H1 (cell line): ENCODE measurements at regions of chr4 and their contacts with region 1.

Region 1: DNA sequence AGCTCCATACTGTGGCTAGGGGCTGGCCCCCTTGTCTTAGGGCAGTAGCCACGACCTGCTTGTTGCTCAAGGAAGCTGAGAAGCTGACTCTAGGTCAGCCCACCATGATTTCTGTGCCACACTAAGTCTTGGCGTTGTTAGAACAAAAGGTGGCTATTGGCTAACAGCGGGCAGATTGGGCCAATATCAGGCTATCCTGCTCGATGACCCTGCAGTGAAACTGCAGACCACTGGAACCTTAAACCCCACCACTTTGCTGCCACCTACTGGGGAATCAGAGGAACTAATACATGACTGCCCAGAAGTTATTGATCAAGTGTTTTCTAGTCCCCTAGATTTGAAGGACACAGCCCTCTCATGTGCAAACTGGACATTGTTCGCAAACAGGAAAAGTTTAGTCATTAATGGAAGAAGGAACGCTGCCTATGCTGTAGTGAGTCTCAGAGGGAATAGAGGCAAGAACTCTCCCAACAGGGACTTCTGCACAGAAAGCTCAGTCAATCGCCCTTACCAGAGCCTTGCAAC is 17.0 kb upstream of the PAPSS1 start:
- DNase-seq: peak in 1 of 2 experiments; percentile 66
- H3K4me3 ChIP-seq: no peak overlapping the region
- H3K27ac ChIP-seq: no peak overlapping the region
- H3K4me1 ChIP-seq: peaks cover 0 to 21% (median 6%) of the 10 kb centered on the region in 4 experiments; a peak in 5 of 7 replicates
- H3K27me3 ChIP-seq: peaks cover 10 to 32% (median 16%) of the 10 kb centered on the region in 4 experiments; a peak in 5 of 7 replicates
- CTCF ChIP-seq: peak; percentile 36 to 82 (median 65)
- EP300 ChIP-seq: no peak
- POLR2A ChIP-seq: no peak
- RAD21 ChIP-seq: peak; percentile 86 to 88

Region 2: GRCh38 chr4:107654694-107655093 is 82.3 kb before region 1 on chr4:
- CTCF ChIA-PET with region 1: interaction called, 25 read pairs
- POLR2A ChIA-PET with region 1: no interaction called
- DNase-seq: no peak
- H3K4me3 ChIP-seq: no peak overlapping the region
- H3K27ac ChIP-seq: no peak overlapping the region
- H3K4me1 ChIP-seq: peaks cover 0 to 3% (median 1%) of the 10 kb centered on the region in 4 experiments; a peak in 3 of 7 replicates
- H3K27me3 ChIP-seq: no peaks in the 10 kb centered on the region
- CTCF ChIP-seq: no peak
- EP300 ChIP-seq: no peak
- POLR2A ChIP-seq: no peak
- RAD21 ChIP-seq: peak; percentile 15 to 18; a peak in 2 of 4 replicates

Region 3: GRCh38 chr4:107719922-107720722 is 16.9 kb before region 1 on chr4 and contains the start of gene PAPSS1:
- CTCF ChIA-PET with region 1: interaction called, 24 read pairs
- POLR2A ChIA-PET with region 1: interaction called, 6 read pairs
- DNase-seq: peak; percentile 96 to 97
- H3K4me3 ChIP-seq: peak within 1 kb of the TSS; percentile 77 to 86 (median 80)
- H3K27ac ChIP-seq: no peak within 1 kb of the TSS
- H3K4me1 ChIP-seq: peaks cover 4 to 18% (median 5%) of the 10 kb centered on the region in 4 experiments; a peak in 6 of 7 replicates
- H3K27me3 ChIP-seq: no peaks in the 10 kb centered on the region
- CTCF ChIP-seq: no peak
- EP300 ChIP-seq: no peak
- POLR2A ChIP-seq: peak in 1 of 2 experiments; percentile 59; a peak in 1 of 3 replicates
- RAD21 ChIP-seq: no peak
- total RNA-seq, gene PAPSS1: 79.1 and 79.2 TPM in 2 replicates

Region 4: DNA sequence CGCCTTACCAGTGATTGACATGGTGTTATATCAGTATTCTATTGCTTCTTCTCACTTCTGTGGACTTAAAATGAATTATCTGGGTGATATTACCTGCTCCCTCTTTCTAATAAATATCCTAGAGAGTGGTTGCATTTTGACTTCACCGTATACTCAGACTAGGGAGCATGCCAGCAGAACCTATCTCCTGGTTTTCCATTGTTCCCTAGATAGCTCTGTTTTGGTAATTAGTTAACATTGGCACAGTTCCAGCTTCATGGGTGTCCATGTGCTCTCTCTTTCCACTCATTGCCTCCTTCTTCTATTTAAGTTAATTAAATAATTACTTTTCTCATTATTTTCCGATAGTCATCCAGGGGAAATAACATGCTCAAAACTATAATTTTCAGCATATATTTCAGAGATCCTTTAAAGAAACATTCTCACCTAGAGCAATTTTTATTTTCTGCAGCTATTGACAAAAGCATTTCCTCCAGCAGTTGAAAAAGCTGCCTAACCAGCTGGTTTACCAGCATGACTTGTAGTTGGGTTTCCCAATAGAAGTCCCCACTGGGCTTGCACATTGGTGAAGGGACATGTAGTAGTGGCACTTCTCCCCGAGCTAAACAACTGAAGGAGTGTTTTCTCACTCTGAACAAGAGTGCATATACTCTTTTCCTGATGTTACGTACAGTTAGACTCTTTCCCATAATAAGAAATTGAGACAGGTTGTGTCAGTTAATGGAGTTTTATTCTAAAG is 10.9 kb after region 1 on chr4:
- CTCF ChIA-PET with region 1: interaction called, 32 read pairs
- POLR2A ChIA-PET with region 1: no interaction called
- DNase-seq: no peak
- H3K4me3 ChIP-seq: no peak overlapping the region
- H3K27ac ChIP-seq: no peak overlapping the region
- H3K4me1 ChIP-seq: no peaks in the 10 kb centered on the region
- H3K27me3 ChIP-seq: no peaks in the 10 kb centered on the region
- CTCF ChIP-seq: no peak
- EP300 ChIP-seq: no peak
- POLR2A ChIP-seq: no peak
- RAD21 ChIP-seq: no peak

Region 5: DNA sequence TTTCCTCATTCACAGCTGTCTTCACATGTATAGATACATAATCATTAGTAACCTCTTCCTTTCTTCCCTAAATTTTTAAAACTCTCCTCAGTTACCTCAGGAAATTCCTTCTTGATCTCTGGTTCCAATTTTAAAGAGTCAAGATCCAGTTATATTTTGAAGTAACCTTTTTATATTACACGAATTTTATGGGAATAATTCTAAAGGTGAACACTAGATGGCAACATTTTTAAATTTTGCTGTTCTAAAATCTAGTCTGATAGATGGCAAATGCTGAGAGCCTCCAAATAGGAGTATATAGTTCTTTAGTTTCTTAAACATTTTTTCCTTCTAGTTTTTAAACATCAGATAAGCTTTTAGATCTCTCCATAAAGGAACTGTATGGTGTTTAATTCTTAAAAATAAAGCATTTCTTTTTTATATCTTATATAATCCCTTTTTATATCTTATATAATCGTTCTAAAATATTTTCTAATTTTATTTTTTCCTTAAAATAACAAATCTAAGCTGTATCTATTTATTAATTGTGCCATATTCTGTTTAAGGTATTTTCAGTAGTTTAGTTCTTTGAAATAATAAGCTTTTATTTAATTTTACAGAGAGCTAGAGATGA is 21.0 kb after region 1 on chr4:
- CTCF ChIA-PET with region 1: interaction called, 11 read pairs
- POLR2A ChIA-PET with region 1: interaction called, 3 read pairs
- DNase-seq: no peak
- H3K4me3 ChIP-seq: no peak overlapping the region
- H3K27ac ChIP-seq: no peak overlapping the region
- H3K4me1 ChIP-seq: no peaks in the 10 kb centered on the region; a peak in 1 of 7 replicates
- H3K27me3 ChIP-seq: no peaks in the 10 kb centered on the region
- CTCF ChIP-seq: no peak; a peak in 1 of 4 replicates
- EP300 ChIP-seq: no peak
- POLR2A ChIP-seq: no peak
- RAD21 ChIP-seq: peak in 1 of 2 experiments; percentile 28; a peak in 3 of 4 replicates